SK-N-SH (cell line): ENCODE measurements at regions of chr2 and their contacts with region 1.

Region 1: DNA sequence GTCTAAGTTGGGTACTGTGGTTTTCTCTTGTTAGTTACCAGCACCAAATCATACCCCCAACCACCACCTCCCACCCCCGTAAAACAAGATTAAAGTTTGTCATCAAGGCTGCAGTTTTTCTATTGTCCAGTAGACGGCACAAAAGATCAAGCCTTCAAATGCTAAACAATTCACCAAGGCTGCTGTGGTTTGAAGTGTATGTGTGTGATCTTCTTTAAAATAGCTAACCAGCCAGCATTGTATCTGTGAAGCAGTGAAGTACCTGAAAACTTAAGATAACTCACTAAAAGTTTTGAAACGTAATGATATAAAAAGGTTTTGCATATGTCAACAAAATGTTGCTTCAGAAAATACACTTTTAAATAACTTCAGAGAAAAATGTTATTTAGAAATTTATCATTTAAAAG is 5.9 kb upstream of the MEIS1 start:
- DNase-seq: peak; percentile 63
- H3K4me3 ChIP-seq: no peak overlapping the region; a peak in 1 of 4 replicates
- H3K27ac ChIP-seq: no peak overlapping the region
- H3K4me1 ChIP-seq: peaks cover 0 to 2% of the 10 kb centered on the region in 2 experiments; a peak in 1 of 4 replicates
- H3K27me3 ChIP-seq: no peaks in the 10 kb centered on the region
- CTCF ChIP-seq: peak; percentile 92
- EP300 ChIP-seq: no peak
- RAD21 ChIP-seq: peak; percentile 93

Region 2: DNA sequence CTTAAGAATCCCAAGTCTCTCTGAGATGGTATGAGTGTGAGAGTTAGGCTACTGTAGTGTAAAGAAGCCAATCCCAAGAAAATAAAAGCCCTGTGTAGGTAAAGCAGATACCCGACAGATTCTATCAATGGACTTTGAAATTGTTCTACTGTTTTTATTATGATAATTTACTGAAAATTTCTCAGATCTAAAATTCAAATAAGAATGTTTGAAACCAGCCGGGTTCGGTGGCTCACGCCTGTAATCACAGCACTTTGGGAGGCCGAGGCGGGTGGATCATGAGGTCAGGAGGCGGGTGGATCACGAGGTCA is 788.3 kb before region 1 on chr2:
- CTCF ChIA-PET with region 1: interaction called, 13 read pairs
- POLR2A ChIA-PET with region 1: interaction called, 3 read pairs
- DNase-seq: no peak
- H3K4me3 ChIP-seq: no peak overlapping the region
- H3K27ac ChIP-seq: no peak overlapping the region
- H3K4me1 ChIP-seq: peaks cover 0 to 5% of the 10 kb centered on the region in 2 experiments; a peak in 2 of 4 replicates
- H3K27me3 ChIP-seq: no peaks in the 10 kb centered on the region
- CTCF ChIP-seq: no peak
- EP300 ChIP-seq: no peak
- RAD21 ChIP-seq: no peak

Region 3: GRCh38 chr2:65722028-65722778 is 706.9 kb before region 1 on chr2:
- CTCF ChIA-PET with region 1: interaction called, 15 read pairs
- POLR2A ChIA-PET with region 1: no interaction called
- DNase-seq: peak; percentile 61
- H3K4me3 ChIP-seq: no peak overlapping the region
- H3K27ac ChIP-seq: no peak overlapping the region
- H3K4me1 ChIP-seq: no peaks in the 10 kb centered on the region; a peak in 1 of 4 replicates
- H3K27me3 ChIP-seq: no peaks in the 10 kb centered on the region
- CTCF ChIP-seq: no peak
- EP300 ChIP-seq: no peak
- RAD21 ChIP-seq: peak; percentile 95

Region 4: DNA sequence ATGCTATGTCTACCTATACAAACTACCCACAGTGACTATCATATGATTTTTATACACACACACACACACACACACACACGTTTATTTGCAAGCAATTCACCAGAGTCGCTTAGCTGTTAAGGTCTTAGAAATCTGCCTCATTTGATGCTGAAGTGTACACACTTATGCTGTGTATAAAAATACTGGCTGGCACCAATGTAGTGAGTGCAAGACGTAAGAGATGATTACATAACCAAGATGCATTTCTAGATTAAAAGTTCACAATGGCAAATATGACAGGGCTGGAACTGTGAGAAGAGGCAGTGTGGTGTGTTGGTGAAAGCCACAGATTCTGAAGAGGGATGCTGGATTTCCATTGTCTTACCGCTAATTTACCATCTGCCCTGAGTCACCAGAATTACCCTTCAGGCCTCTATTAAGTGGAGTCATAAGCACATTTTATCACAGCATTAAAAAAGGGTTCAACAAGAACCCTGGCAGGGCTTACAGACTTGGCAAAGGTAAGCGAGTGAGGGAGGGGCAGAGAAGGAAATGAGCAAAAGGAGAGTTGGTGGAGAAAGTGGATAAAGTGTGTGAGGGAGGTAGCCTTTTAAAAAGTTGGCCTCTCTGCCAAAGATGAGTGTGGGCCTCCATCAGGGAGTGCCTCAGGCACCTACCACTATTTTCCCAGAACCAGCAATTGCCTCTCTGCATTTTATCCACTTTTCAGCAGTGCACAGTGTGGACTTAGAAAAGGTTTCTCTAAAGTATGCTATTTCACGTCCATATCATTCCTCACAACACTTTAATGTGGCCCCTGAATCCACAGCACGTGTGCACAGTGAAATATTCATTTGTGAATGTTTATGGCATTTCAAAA is 27.3 kb after region 1 on chr2:
- CTCF ChIA-PET with region 1: no interaction called
- POLR2A ChIA-PET with region 1: no interaction called
- DNase-seq: no peak
- H3K4me3 ChIP-seq: no peak overlapping the region
- H3K27ac ChIP-seq: no peak overlapping the region
- H3K4me1 ChIP-seq: peaks cover 0 to 15% of the 10 kb centered on the region in 2 experiments; a peak in 3 of 4 replicates
- H3K27me3 ChIP-seq: no peaks in the 10 kb centered on the region
- CTCF ChIP-seq: no peak
- EP300 ChIP-seq: no peak
- RAD21 ChIP-seq: no peak

Region 5: GRCh38 chr2:66477135-66477842 is 48.2 kb after region 1 on chr2:
- CTCF ChIA-PET with region 1: no interaction called
- POLR2A ChIA-PET with region 1: no interaction called
- DNase-seq: no peak
- H3K4me3 ChIP-seq: no peak overlapping the region
- H3K27ac ChIP-seq: no peak overlapping the region
- H3K4me1 ChIP-seq: peaks cover 3 to 31% of the 10 kb centered on the region in 2 experiments; a peak in 3 of 4 replicates
- H3K27me3 ChIP-seq: no peaks in the 10 kb centered on the region
- CTCF ChIP-seq: no peak
- EP300 ChIP-seq: no peak
- RAD21 ChIP-seq: no peak

Region 6: DNA sequence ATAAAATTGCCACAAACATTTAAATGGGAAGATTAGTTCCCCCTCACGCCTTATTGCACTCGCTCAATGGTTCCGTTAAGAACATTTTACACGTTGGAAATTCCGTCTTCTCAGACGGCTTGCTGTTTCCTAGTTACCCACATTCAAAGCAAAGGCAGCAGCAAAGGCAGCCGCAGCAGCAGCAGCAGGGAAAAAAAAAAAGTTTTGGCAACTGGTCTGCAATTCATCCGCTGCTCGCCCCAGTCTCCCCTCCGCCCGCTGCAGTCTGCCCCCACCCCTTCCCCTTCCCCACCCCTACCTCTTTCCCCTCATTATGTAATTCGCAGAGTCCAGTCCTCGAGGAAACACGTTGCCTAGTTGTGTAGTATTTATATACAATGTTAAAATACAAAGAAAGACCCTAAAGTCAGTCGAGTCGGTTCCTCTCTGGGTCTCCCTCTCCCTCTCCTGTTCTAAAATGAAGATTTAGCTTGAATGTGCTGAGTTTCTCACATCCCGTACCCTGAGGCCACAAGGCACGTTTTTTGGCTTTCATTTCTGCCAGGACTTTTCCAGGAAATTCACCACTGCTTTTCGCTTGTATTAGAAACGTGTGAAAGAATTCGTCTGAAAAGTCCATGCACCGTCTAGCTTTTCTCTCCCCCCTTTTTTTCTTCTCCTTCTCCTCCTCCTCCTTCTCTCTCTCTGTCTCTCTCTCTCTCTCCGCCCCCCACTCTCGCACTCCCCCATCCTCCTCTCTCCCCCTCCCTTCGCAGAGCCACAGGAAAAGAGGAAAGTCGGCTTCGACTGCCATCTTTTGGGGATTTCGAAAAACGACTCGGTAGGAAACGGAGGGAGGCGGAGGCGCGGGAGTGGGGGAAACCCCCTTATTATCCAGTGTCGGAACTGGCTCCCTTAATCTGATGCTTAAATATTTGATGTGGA is 145.9 kb after region 1 on chr2:
- CTCF ChIA-PET with region 1: interaction called, 35 read pairs
- POLR2A ChIA-PET with region 1: interaction called, 27 read pairs
- DNase-seq: peak; percentile 91
- H3K4me3 ChIP-seq: peak overlapping the region; percentile 53 to 73
- H3K27ac ChIP-seq: peak overlapping the region; percentile 93 to 98
- H3K4me1 ChIP-seq: peaks cover 5 to 18% of the 10 kb centered on the region in 2 experiments; a peak in 3 of 4 replicates
- H3K27me3 ChIP-seq: no peaks in the 10 kb centered on the region
- CTCF ChIP-seq: peak; percentile 68
- EP300 ChIP-seq: peak in 1 of 2 experiments; percentile 32; a peak in 2 of 4 replicates
- RAD21 ChIP-seq: peak; percentile 82

Region 7: GRCh38 chr2:67215214-67216055 is 786.4 kb after region 1 on chr2:
- CTCF ChIA-PET with region 1: interaction called, 15 read pairs
- POLR2A ChIA-PET with region 1: interaction called, 10 read pairs
- DNase-seq: peak; percentile 69
- H3K4me3 ChIP-seq: no peak overlapping the region; a peak in 1 of 4 replicates
- H3K27ac ChIP-seq: peak overlapping the region in 1 of 2 experiments; percentile 53; a peak in 2 of 4 replicates
- H3K4me1 ChIP-seq: peaks cover 0 to 18% of the 10 kb centered on the region in 2 experiments; a peak in 2 of 4 replicates
- H3K27me3 ChIP-seq: no peaks in the 10 kb centered on the region
- CTCF ChIP-seq: peak; percentile 71
- EP300 ChIP-seq: no peak
- RAD21 ChIP-seq: peak; percentile 97

Region 8: DNA sequence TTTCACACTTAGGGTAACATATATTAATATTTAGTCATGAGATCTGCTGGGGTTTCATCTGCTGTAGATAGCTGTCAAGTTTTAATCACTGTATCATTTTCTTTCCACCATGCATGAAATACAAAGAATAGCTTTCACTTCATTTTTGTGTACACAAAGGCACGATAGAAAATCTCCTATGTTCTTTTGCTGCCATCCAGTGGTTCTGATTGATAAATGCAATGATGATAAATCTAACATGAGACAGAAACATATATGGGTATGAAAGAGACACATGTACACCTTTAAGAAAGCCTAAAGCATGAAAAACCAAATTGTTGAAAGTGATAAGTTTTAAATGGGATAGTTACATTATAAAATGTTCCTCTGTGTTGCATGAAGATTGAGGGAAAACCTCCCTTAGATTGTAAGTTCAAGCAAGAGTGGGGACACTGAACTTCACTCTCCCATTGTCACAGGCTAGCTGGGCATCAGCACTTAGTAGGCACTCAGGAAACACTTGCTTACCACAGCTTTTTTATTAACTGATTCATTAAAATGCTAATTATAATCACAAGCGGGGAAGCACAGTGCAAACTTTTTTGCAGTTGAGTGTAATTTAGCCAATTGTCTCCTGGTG is 1602.6 kb after region 1 on chr2:
- CTCF ChIA-PET with region 1: interaction called, 12 read pairs
- POLR2A ChIA-PET with region 1: interaction called, 5 read pairs
- DNase-seq: peak; percentile 48
- H3K4me3 ChIP-seq: no peak overlapping the region
- H3K27ac ChIP-seq: peak overlapping the region; percentile 50 to 80
- H3K4me1 ChIP-seq: peaks cover 4 to 23% of the 10 kb centered on the region in 2 experiments
- H3K27me3 ChIP-seq: no peaks in the 10 kb centered on the region
- CTCF ChIP-seq: peak; percentile 77
- EP300 ChIP-seq: no peak
- RAD21 ChIP-seq: peak; percentile 97